ENCODE measurements at regions of chr11 and their contacts with region 1.

Region 1: DNA sequence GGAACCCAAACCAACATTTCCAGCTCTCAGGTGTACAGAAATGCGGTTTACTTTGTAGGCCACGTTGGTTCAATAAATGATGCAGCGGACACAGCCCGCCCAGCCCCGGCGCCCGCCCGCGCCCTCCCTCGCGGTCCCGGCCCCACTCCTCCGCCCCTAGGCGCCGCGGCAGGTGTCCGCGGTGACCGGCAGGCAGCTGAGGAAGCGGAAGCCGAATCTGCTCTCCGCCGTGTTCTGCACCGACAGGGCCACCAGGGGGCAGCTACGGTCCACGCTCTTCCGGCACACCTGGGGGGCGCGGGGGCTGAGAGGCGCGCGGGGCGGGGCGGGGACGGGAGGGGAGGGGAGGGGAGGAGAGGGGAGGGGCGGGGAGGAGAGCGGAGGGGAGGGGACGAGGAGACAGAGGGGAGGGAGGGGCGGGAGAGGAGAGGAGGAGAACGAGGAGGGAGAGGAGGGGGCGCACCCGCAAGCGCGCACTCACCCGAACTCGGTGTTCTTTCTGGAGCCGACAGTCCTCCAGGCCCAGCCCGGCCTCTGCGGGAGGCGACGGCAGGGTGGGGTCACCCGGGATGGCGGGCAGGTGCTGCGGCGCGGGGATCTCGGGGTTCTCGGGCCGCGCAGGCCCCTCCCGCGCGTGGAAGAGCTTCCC is 5.6 kb downstream of the LMNTD2 start:
- DNase-seq: peak in 2 of 3 donors; percentile 71 to 74
- ATAC-seq: peak; percentile 66 to 76 (median 69)
- H3K4me3 ChIP-seq: peak overlapping the region; percentile 16 to 33 (median 26)
- H3K27ac ChIP-seq: no peak overlapping the region
- H3K4me1 ChIP-seq: peaks cover 0 to 17% (median 2%) of the 10 kb centered on the region in 4 donors
- H3K27me3 ChIP-seq: no peaks in the 10 kb centered on the region
- CTCF ChIP-seq: peak; percentile 43 to 55 (median 50)
- POLR2A ChIP-seq: no peak

Region 2: DNA sequence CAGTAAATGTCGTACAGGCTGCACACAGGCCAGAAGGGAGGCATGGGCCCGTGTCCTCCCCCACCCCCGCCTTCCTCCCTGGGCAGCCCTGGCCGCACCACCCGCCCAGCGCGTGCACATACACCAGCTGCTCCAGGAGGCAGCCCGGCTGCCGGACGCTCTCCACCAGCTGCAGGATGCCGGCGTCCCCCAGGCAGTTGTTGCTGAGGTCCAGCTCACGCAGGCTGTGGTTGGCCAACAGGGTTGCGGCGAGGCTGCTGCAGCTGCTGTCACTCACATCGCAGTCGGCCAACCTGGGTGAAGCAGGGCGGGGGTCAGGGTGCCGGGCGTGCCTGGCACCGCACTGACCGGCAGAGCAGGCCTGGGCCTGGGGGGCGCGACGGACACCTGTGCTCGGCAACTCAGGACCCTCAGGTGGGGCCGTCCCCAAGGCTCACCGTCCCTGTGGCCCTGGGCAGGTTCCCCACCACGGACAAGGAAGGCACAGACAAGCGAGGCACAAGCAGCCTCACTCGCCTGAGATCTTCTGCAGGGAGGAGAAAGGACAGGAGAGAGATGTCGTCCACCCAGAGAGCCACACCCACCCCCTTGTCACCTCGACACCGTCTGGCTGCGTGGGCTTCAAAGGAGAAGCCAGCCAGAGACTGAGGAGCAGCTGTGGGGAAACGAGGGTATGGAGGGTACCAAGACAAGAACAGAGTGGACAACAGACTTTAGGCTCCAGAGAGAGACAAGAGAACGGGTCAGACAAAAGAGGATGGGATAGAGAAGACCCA is 60.0 kb before region 1 on chr11:
- intact Hi-C with region 1: no loop called
- DNase-seq: no peak
- ATAC-seq: peak in 1 of 4 donors; percentile 5
- H3K4me3 ChIP-seq: no peak overlapping the region
- H3K27ac ChIP-seq: no peak overlapping the region
- H3K4me1 ChIP-seq: no peaks in the 10 kb centered on the region
- H3K27me3 ChIP-seq: no peaks in the 10 kb centered on the region
- CTCF ChIP-seq: no peak
- POLR2A ChIP-seq: no peak

Region 3: GRCh38 chr11:613369-614268 is 58.7 kb after region 1 on chr11:
- intact Hi-C with region 1: loop called in 1 of 2 experiments (anchors 5 kb)
- DNase-seq: peak; percentile 83 to 89 (median 88)
- ATAC-seq: peak; percentile 2 to 34 (median 17)
- H3K4me3 ChIP-seq: peak overlapping the region; percentile 63 to 73 (median 65)
- H3K27ac ChIP-seq: peak overlapping the region in 1 of 3 donors; percentile 85
- H3K4me1 ChIP-seq: peaks cover 0 to 57% (median 27%) of the 10 kb centered on the region in 4 donors
- H3K27me3 ChIP-seq: no peaks in the 10 kb centered on the region
- CTCF ChIP-seq: no peak
- POLR2A ChIP-seq: peak; percentile 42

Region 4: GRCh38 chr11:749731-750130 is 194.8 kb after region 1 on chr11:
- intact Hi-C with region 1: loop called in 1 of 2 experiments (anchors 10 kb)
- DNase-seq: no peak
- ATAC-seq: no peak
- H3K4me3 ChIP-seq: no peak overlapping the region
- H3K27ac ChIP-seq: no peak overlapping the region
- H3K4me1 ChIP-seq: peaks cover 0 to 32% (median 5%) of the 10 kb centered on the region in 4 donors
- H3K27me3 ChIP-seq: no peaks in the 10 kb centered on the region
- CTCF ChIP-seq: no peak
- POLR2A ChIP-seq: no peak